Activated B cell treated with CpG ODN at 0.5 μM for 24 hours (primary cell): ENCODE measurements at regions of chr11 and their contacts with region 1.

Region 1: GRCh38 chr11:96054870-96055705 is 131.2 kb upstream of the MTMR2 start:
- DNase-seq: no peak
- ATAC-seq: no peak
- H3K4me3 Mint-ChIP-seq: no peak overlapping the region
- H3K27ac Mint-ChIP-seq: peak overlapping the region; percentile 15
- H3K4me1 Mint-ChIP-seq: peaks cover 19% of the 10 kb centered on the region
- H3K27me3 Mint-ChIP-seq: no peaks in the 10 kb centered on the region
- CTCF ChIP-seq: peak; percentile 75

Region 2: DNA sequence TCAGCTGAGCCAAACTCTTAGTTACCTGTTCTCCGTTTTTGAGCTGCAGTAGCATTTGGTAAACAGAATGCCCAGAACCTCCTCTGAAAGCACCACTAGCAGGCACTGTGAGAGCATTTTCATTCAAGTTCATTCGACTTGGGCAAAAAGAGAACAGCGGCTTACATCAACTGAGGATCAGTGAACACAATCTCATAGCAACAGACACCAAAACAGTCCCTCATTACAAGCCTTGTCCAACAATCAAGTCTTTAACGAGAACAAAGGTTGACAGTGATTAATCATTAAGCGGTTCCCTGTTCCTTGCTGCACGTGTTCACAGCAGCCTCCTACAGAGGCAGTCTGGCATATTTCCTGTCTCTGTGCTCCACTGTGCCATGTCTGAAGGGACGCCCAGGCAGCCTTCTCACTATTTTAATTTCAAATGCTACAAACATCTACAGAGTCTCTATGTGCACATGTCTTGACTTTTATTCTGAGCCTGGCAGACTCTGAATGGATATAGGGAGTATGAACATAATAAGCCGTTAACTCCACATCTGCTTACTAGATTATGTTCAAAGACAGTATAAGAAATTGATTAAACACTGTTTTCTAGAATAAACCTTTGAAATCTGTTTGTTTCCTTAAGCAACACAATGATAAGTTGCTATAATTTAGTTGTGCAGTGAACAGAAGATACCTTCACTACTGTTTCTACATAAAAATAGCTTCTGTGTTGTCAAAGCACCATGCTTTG is 42.8 kb before region 1 on chr11:
- CTCF ChIA-PET with region 1: interaction called, 5 read pairs
- POLR2A ChIA-PET with region 1: interaction called, 9 read pairs
- intact Hi-C with region 1: loop called (anchors 5 kb)
- DNase-seq: peak; percentile 21
- ATAC-seq: peak; percentile 91
- H3K4me3 Mint-ChIP-seq: peak overlapping the region; percentile 46
- H3K27ac Mint-ChIP-seq: peak overlapping the region; percentile 85
- H3K4me1 Mint-ChIP-seq: peaks cover 44% of the 10 kb centered on the region
- H3K27me3 Mint-ChIP-seq: no peaks in the 10 kb centered on the region
- CTCF ChIP-seq: no peak

Region 3: GRCh38 chr11:96035031-96035739 is 19.9 kb before region 1 on chr11:
- CTCF ChIA-PET with region 1: no interaction called
- POLR2A ChIA-PET with region 1: no interaction called
- intact Hi-C with region 1: loop called (anchors 2 kb)
- DNase-seq: no peak
- ATAC-seq: no peak
- H3K4me3 Mint-ChIP-seq: no peak overlapping the region
- H3K27ac Mint-ChIP-seq: no peak overlapping the region
- H3K4me1 Mint-ChIP-seq: no peaks in the 10 kb centered on the region
- H3K27me3 Mint-ChIP-seq: no peaks in the 10 kb centered on the region
- CTCF ChIP-seq: no peak

Region 4: GRCh38 chr11:96075532-96075959 is 20.5 kb after region 1 on chr11:
- CTCF ChIA-PET with region 1: interaction called, 4 read pairs
- POLR2A ChIA-PET with region 1: interaction called, 4 read pairs
- intact Hi-C with region 1: loop called (anchors 2 kb)
- DNase-seq: no peak
- ATAC-seq: peak; percentile 81
- H3K4me3 Mint-ChIP-seq: peak overlapping the region; percentile 66
- H3K27ac Mint-ChIP-seq: peak overlapping the region; percentile 83
- H3K4me1 Mint-ChIP-seq: peaks cover 44% of the 10 kb centered on the region
- H3K27me3 Mint-ChIP-seq: no peaks in the 10 kb centered on the region
- CTCF ChIP-seq: no peak

Region 5: GRCh38 chr11:96242971-96243647 is 188.0 kb after region 1 on chr11:
- CTCF ChIA-PET with region 1: interaction called, 8 read pairs
- POLR2A ChIA-PET with region 1: interaction called, 8 read pairs
- intact Hi-C with region 1: loop called (anchors 1 kb)
- DNase-seq: peak; percentile 51
- ATAC-seq: peak; percentile 87
- H3K4me3 Mint-ChIP-seq: peak overlapping the region; percentile 90
- H3K27ac Mint-ChIP-seq: peak overlapping the region; percentile 95
- H3K4me1 Mint-ChIP-seq: peaks cover 53% of the 10 kb centered on the region
- H3K27me3 Mint-ChIP-seq: no peaks in the 10 kb centered on the region
- CTCF ChIP-seq: no peak

Region 6: GRCh38 chr11:96267496-96268032 is 212.5 kb after region 1 on chr11:
- CTCF ChIA-PET with region 1: interaction called, 3 read pairs
- POLR2A ChIA-PET with region 1: no interaction called
- intact Hi-C with region 1: loop called (anchors 5 kb)
- DNase-seq: no peak
- ATAC-seq: peak; percentile 98
- H3K4me3 Mint-ChIP-seq: peak overlapping the region; percentile 73
- H3K27ac Mint-ChIP-seq: peak overlapping the region; percentile 89
- H3K4me1 Mint-ChIP-seq: peaks cover 70% of the 10 kb centered on the region
- H3K27me3 Mint-ChIP-seq: no peaks in the 10 kb centered on the region
- CTCF ChIP-seq: no peak